H1 (cell line): ENCODE measurements at regions of chr3 and their contacts with region 1.

Region 1: DNA sequence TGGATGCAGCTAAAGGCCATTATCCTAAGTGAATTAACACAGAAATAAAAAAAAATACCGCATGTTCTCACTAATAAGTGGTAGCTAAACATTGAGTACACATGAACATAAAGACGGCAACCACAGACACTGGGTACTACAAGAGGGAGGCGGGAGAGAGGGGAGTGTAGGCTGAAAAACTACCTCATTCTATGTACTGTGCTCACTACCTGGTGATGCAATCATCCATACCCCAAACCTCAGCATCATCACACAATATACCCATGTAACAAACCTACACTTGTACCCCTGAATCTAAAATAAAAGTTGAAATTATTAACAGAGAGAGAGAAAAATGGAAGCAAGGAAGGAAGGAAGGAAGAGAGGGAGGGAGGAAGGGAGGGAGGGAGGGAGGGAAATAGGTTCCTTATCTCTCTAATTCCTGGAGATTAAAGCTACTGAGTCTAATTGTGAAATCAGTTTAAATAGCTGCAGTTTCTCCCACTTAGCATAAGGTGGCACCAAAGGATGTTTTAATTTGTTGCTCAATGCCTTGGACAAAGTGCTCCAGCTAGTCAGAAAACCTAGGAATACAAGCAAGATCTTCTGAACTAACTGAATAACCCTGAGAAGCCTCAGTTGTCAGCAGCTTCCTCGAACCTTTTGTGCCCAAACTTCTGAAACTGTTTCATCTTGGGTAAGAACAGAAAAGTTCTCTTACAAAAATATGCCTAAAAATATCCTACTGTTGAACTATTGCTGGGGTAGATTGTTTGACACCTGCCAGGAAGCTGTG is 79.4 kb upstream of the ATP11B start:
- DNase-seq: no peak
- H3K4me3 ChIP-seq: no peak overlapping the region
- H3K27ac ChIP-seq: no peak overlapping the region
- H3K4me1 ChIP-seq: peaks cover 0 to 6% (median 1%) of the 10 kb centered on the region in 4 experiments; a peak in 1 of 7 replicates
- H3K27me3 ChIP-seq: no peaks in the 10 kb centered on the region
- CTCF ChIP-seq: peak in 2 of 3 experiments; percentile 52 to 59; a peak in 2 of 4 replicates
- EP300 ChIP-seq: no peak
- POLR2A ChIP-seq: no peak
- RAD21 ChIP-seq: peak; percentile 83 to 85

Region 2: GRCh38 chr3:182683453-182683852 is 30.5 kb before region 1 on chr3:
- CTCF ChIA-PET with region 1: interaction called, 17 read pairs
- POLR2A ChIA-PET with region 1: no interaction called
- DNase-seq: peak in 1 of 2 experiments; percentile 80
- H3K4me3 ChIP-seq: peak overlapping the region in 1 of 4 experiments; percentile 76; a peak in 2 of 8 replicates
- H3K27ac ChIP-seq: no peak overlapping the region
- H3K4me1 ChIP-seq: 0 out of 7 replicates have a peak, but pooled peaks cover 0 to 6% (median 0%) of the 10 kb centered on the region in 4 experiments
- H3K27me3 ChIP-seq: no peaks in the 10 kb centered on the region; a peak in 1 of 7 replicates
- CTCF ChIP-seq: peak; percentile 48 to 84 (median 71)
- EP300 ChIP-seq: no peak
- POLR2A ChIP-seq: no peak
- RAD21 ChIP-seq: peak; percentile 96 to 97

Region 3: DNA sequence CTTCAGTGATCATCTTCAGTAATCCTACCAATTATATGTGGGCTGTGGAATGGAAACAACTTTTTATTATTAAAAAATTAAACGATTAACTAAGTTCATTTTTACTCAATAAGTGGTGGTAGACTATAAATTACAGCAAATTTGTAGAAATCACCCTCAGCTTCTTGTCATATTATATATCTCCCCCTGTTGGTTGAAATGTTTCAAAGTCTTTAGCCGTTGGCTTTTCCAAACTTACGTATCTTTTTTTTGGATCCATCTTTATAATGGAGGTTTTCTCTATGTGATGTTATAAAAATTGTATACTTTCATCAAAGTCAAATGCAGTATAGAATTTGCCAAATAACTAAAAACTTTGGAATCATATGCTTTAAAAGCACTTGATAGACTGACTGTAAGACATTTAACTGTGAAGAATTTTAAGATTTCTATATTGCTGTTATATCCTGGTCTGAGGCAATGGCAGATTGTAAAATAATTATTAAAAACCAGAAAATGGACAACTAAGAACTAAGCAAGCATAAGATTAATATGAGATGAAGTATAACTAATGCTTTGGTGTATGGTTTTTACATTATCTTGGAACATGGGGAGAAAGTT is 124.0 kb after region 1 on chr3:
- CTCF ChIA-PET with region 1: interaction called, 37 read pairs
- POLR2A ChIA-PET with region 1: no interaction called
- DNase-seq: no peak
- H3K4me3 ChIP-seq: no peak overlapping the region
- H3K27ac ChIP-seq: no peak overlapping the region
- H3K4me1 ChIP-seq: no peaks in the 10 kb centered on the region
- H3K27me3 ChIP-seq: no peaks in the 10 kb centered on the region
- CTCF ChIP-seq: peak in 2 of 3 experiments; percentile 18 to 30; a peak in 2 of 4 replicates
- EP300 ChIP-seq: no peak
- POLR2A ChIP-seq: no peak
- RAD21 ChIP-seq: peak; percentile 37